OCI-LY7 (cell line): ENCODE measurements at regions of chr4 and their contacts with region 1.

Region 1: DNA sequence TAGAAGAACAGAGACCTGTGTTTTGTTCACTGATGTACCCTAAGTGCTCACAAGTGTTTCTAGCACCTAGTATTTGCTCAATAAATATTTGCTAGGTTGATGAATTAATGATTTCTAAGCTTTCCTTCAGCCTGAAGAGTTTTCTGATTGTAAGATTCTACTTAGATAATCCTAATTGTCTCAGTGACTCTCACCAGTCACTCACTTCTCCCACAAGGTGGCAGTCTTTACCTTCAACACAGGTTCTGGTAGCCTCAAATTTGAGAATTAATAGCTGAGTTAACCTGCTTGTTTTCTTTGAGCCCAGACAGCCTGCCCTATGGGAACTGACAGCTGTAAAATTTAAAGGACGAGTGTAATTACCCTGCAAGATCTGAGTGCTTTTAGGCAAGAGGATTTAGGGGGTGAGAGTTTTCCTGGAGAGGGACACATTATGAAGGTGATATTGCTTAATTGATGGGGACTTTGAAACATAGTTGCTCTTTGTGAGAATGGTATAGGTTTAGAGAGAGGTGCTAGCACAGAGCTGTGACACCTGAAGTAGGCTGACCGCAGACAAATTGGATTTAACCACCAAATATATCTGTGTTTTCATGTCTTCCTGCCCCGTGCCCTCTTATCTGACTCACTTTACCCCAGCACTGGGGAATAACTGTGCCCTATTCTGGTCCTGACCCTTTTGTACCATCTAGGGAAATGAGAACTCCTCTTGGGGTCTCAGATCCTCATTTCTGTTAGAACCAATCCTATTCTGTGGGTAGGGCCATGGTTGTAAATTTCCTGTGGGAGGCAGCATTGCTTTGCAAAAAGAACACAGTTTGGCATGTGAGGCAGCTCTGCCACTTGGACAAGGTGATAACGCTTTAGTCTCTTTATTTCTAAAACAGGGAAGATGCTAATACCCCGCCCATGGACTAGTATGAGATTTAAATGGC is 27.7 kb downstream of the CD38 start:
- DNase-seq: peak; percentile 81
- H3K4me3 ChIP-seq: no peak overlapping the region
- H3K27ac ChIP-seq: peak overlapping the region; percentile 60
- H3K4me1 ChIP-seq: peaks cover 90% of the 10 kb centered on the region
- CTCF ChIP-seq: peak; percentile 94

Region 2: GRCh38 chr4:15410750-15411149 is 395.1 kb before region 1 on chr4:
- CTCF ChIA-PET with region 1: no interaction called
- POLR2A ChIA-PET with region 1: no interaction called
- intact Hi-C with region 1: loop called (anchors 10 kb)
- DNase-seq: peak; percentile 62
- H3K4me3 ChIP-seq: peak overlapping the region; percentile 34
- H3K27ac ChIP-seq: peak overlapping the region; percentile 19
- H3K4me1 ChIP-seq: peaks cover 41% of the 10 kb centered on the region
- CTCF ChIP-seq: no peak

Region 3: GRCh38 chr4:15479089-15479912 is 326.5 kb before region 1 on chr4:
- CTCF ChIA-PET with region 1: no interaction called
- POLR2A ChIA-PET with region 1: no interaction called
- intact Hi-C with region 1: loop called (anchors 10 kb)
- DNase-seq: peak; percentile 44
- H3K4me3 ChIP-seq: no peak overlapping the region
- H3K27ac ChIP-seq: no peak overlapping the region
- H3K4me1 ChIP-seq: no peaks in the 10 kb centered on the region
- CTCF ChIP-seq: peak; percentile 80

Region 4: DNA sequence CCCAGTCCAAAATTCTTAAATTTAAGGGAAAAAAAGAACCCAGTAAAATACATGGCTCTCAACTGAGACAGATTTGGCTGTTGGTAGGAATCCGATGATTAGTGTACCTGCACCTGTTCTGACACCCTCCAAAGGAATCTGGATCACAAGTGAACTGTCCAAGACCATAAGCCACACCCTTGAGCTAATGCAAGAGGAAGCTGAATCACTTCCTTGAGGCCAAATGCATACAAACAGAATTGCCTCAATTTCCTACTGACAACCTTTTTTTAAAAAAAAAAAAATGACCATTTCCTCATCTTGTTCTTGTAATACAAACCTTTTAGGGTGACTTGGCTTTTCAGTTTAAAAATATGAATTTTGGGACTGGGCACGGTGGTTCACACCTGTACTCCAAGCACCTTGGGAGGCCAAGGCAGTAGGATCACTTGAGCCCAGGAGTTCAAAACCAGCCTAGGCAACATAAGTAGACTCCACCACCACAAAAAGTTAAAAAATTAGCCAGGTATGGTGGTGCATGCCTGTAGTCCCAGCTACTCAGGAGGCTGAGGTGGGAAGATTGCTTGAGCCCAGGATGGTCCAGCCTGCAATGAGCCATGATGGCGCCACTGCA is 140.0 kb before region 1 on chr4:
- CTCF ChIA-PET with region 1: no interaction called
- POLR2A ChIA-PET with region 1: no interaction called
- intact Hi-C with region 1: no loop called
- DNase-seq: no peak
- H3K4me3 ChIP-seq: no peak overlapping the region
- H3K27ac ChIP-seq: no peak overlapping the region
- H3K4me1 ChIP-seq: peaks cover 15% of the 10 kb centered on the region
- CTCF ChIP-seq: no peak

Region 5: GRCh38 chr4:15882675-15883086 is 76.8 kb after region 1 on chr4:
- CTCF ChIA-PET with region 1: interaction called, 3 read pairs
- POLR2A ChIA-PET with region 1: interaction called, 3 read pairs
- intact Hi-C with region 1: loop called (anchors 2 kb)
- DNase-seq: peak; percentile 87
- H3K4me3 ChIP-seq: no peak overlapping the region
- H3K27ac ChIP-seq: no peak overlapping the region
- H3K4me1 ChIP-seq: peaks cover 3% of the 10 kb centered on the region
- CTCF ChIP-seq: peak; percentile 94

Region 6: GRCh38 chr4:16001484-16001858 is 195.6 kb after region 1 on chr4:
- CTCF ChIA-PET with region 1: no interaction called
- POLR2A ChIA-PET with region 1: no interaction called
- intact Hi-C with region 1: loop called (anchors 2 kb)
- DNase-seq: peak; percentile 75
- H3K4me3 ChIP-seq: no peak overlapping the region
- H3K27ac ChIP-seq: no peak overlapping the region
- H3K4me1 ChIP-seq: no peaks in the 10 kb centered on the region
- CTCF ChIP-seq: peak; percentile 92